ENCODE measurements at regions of chr18 and their contacts with region 1.

Region 1: DNA sequence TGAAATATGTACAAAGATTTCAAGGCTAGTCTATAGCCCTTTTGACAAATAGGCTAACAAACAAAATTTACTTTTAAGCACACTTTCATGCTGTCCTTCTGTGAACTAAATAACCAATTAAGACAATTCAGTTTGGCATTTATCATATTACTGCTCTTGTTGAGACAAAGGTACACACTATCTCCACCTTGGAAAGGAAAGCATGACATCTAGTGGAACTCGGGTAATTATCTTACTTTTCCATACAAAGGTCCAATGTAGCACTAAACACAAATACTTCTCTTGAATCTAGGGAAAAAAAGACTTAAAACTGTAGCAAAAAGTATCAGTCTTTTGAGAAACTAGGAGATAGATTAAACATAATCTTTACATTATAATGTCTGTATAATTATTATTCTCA is 125.0 kb upstream of the CD226 start:
- DNase-seq: peak in 2 of 9 experiments; percentile 34 to 39
- ATAC-seq: no peak
- H3K4me3 ChIP-seq: no peak overlapping the region
- H3K4me3 Mint-ChIP-seq: no peak overlapping the region
- H3K27ac ChIP-seq: no peak overlapping the region
- H3K27ac Mint-ChIP-seq: no peak overlapping the region
- H3K4me1 ChIP-seq: no peaks in the 10 kb centered on the region
- H3K4me1 Mint-ChIP-seq: peaks cover 5% of the 10 kb centered on the region
- H3K27me3 ChIP-seq: no peaks in the 10 kb centered on the region
- H3K27me3 Mint-ChIP-seq: no peaks in the 10 kb centered on the region
- CTCF ChIP-seq: peak; percentile 27

Region 2: DNA sequence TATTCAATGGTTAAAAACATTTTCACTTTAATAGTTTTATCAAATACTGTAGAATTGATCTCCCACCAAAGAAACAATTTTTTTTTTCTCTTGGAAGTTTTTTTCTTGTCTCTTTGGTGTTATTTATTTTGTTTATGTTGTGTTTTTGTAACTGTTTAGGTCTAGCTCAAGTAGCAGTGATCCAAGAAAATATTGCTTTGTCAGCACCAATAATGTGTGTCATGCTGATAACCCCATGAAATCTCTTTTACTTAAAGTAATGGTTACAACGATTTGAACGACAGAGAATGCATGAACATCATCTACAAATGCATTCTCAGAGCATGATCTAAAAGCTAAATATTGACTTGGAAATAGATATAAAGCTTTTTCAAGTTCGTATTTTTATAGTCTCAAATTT is 549.1 kb before region 1 on chr18:
- CTCF ChIA-PET with region 1: no interaction called
- POLR2A ChIA-PET with region 1: no interaction called
- intact Hi-C with region 1: loop called in 1 of 2 experiments (anchors 5 kb)
- DNase-seq: no peak
- ATAC-seq: no peak
- H3K4me3 ChIP-seq: no peak overlapping the region
- H3K4me3 Mint-ChIP-seq: no peak overlapping the region
- H3K27ac ChIP-seq: no peak overlapping the region
- H3K27ac Mint-ChIP-seq: no peak overlapping the region
- H3K4me1 ChIP-seq: no peaks in the 10 kb centered on the region
- H3K4me1 Mint-ChIP-seq: no peaks in the 10 kb centered on the region
- H3K27me3 ChIP-seq: no peaks in the 10 kb centered on the region
- H3K27me3 Mint-ChIP-seq: peaks cover 6% of the 10 kb centered on the region
- CTCF ChIP-seq: no peak

Region 3: DNA sequence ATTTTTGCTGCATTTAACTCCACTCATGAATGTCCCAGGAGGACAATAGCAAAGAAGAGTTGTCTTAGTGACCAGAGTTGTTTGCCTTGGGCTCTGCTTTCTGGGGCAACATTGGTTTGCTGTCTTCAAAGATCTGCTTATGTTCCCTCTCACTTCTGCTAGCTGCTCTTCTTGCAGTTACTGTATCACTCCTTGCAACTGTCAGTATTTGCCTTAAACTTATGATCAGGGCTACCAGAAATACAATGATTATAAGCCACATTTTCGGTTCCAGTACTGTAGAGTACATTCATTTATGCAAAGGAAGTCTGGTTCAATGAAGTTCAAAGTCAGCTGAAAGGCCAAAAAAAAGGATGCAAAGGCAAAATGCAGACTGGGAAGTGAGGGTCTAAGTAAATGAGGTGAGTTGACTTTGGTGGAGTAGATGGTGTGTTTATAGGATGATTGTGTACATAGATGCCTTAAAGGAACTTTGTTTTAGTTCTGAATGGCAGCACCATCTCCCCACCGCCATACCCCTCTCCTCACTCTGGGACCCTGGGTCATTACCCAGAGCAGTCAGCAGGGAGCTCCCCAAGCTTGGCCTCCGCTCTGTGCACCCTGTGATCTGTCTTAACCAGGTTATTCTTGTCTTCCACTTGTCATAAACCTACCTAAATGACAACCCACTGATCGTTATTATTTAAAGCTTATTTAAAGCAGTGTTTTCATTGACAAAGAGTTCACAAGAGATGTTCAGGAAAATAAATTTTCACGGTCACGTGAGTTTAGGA is 436.0 kb before region 1 on chr18:
- CTCF ChIA-PET with region 1: no interaction called
- POLR2A ChIA-PET with region 1: no interaction called
- intact Hi-C with region 1: loop called (anchors 5 kb)
- DNase-seq: peak in 3 of 9 experiments; percentile 6 to 43 (median 28)
- ATAC-seq: peak; percentile 62
- H3K4me3 ChIP-seq: no peak overlapping the region
- H3K4me3 Mint-ChIP-seq: no peak overlapping the region
- H3K27ac ChIP-seq: no peak overlapping the region
- H3K27ac Mint-ChIP-seq: no peak overlapping the region
- H3K4me1 ChIP-seq: no peaks in the 10 kb centered on the region
- H3K4me1 Mint-ChIP-seq: no peaks in the 10 kb centered on the region
- H3K27me3 ChIP-seq: no peaks in the 10 kb centered on the region
- H3K27me3 Mint-ChIP-seq: peaks cover 2% of the 10 kb centered on the region
- CTCF ChIP-seq: peak; percentile 26

Region 4: GRCh38 chr18:69845593-69846506 is 226.8 kb before region 1 on chr18:
- CTCF ChIA-PET with region 1: interaction called, 3 read pairs
- POLR2A ChIA-PET with region 1: no interaction called
- intact Hi-C with region 1: loop called in 1 of 2 experiments (anchors 5 kb)
- DNase-seq: peak in 1 of 9 experiments; percentile 3
- ATAC-seq: no peak
- H3K4me3 ChIP-seq: no peak overlapping the region
- H3K4me3 Mint-ChIP-seq: no peak overlapping the region
- H3K27ac ChIP-seq: no peak overlapping the region
- H3K27ac Mint-ChIP-seq: no peak overlapping the region
- H3K4me1 ChIP-seq: no peaks in the 10 kb centered on the region
- H3K4me1 Mint-ChIP-seq: no peaks in the 10 kb centered on the region
- H3K27me3 ChIP-seq: no peaks in the 10 kb centered on the region
- H3K27me3 Mint-ChIP-seq: no peaks in the 10 kb centered on the region
- CTCF ChIP-seq: no peak

Region 5: DNA sequence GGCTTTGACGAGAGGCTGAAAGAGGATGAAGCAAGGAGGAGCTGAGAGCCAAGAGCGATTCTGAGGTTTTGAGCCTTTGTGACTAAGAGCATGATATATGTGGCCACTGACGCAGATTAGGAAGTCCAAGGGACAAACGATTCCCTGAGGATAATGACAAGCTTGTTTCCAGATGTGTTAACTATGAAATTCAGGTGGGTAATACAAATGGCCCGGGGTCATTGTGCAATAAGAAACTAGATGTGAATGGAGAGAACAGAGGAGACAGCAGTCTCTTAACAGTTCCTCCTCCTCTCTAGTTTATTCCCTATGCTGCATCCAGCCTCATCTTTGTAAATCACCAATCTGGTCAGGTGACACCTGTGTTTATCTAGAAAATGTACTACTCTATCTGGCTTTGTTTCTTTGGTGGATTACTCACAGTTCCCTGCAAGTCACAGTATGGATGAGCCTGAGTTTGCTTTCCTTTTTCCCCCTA is 300.4 kb after region 1 on chr18:
- CTCF ChIA-PET with region 1: no interaction called
- POLR2A ChIA-PET with region 1: no interaction called
- intact Hi-C with region 1: no loop called
- DNase-seq: no peak
- ATAC-seq: no peak
- H3K4me3 ChIP-seq: no peak overlapping the region
- H3K4me3 Mint-ChIP-seq: no peak overlapping the region
- H3K27ac ChIP-seq: no peak overlapping the region
- H3K27ac Mint-ChIP-seq: no peak overlapping the region
- H3K4me1 ChIP-seq: no peaks in the 10 kb centered on the region
- H3K4me1 Mint-ChIP-seq: no peaks in the 10 kb centered on the region
- H3K27me3 ChIP-seq: no peaks in the 10 kb centered on the region
- H3K27me3 Mint-ChIP-seq: peaks cover 14% of the 10 kb centered on the region
- CTCF ChIP-seq: no peak

Measured in CD8-positive, alpha-beta T cell (primary cell).